Activated T-helper 1 cell treated with anti-CD3 and anti-CD28 coated beads, Interleukin-12 subunit alpha, Interleukin-12 subunit beta, Interleukin-2, Interleukin-4 antibody, amounts not matched to agents 30 ng/mL and 10 ng/mL and 1 ng/mL, durations not matched to agents 14 hours and 24 hours and 36 hours (primary cell): ENCODE measurements at regions of chr13 and their contacts with region 1.

Region 1: DNA sequence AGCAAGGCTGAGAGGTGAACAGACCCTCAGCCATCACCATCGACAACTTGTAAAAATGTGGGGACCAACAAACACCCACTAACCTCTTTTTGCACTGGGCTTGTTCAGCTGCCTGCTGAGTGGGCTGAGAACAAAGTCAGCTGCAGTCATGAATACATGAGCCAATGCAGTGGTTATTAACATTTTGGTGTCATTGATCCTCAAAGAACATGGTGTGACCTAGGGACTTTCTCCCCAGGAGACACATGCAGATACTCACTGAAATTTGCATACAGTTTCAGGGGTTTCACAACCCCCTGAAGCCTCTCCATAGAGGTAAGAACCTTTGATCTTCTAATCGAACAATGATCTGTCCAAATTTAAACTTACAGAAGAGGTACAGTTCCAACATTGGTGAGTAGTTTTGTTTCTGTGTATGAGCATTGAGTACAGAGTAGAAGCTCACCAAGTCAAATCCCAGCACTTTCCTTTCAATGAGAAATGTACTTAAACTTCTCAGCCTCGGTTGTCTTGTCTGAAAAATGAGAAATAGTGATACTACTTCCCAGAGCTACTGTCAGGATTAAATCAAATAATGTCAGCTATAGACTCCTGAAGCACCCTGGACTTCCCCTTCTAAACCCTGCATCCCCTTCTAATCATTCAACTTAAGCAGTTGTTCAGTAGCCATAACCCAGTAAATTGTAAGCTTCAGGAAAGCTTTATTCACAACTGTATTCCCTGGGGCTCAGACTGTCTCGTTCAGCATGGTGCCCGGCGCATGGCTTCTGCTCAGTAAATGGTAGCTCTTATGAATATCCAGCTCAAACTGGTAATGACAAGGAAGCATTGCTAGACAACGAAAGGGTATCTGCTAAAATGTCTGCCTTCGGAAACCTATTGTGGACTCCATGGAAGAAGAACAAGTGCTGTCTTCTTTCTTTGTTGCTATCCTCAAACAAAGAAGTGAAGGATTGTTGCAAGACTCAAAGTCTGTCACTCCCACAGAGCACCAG is 148.7 kb downstream of the FOXO1 start:
- DNase-seq: no peak
- H3K4me3 Mint-ChIP-seq: peak overlapping the region; percentile 62
- H3K27ac Mint-ChIP-seq: peak overlapping the region; percentile 69
- H3K4me1 Mint-ChIP-seq: peaks cover 83% of the 10 kb centered on the region
- H3K27me3 Mint-ChIP-seq: no peaks in the 10 kb centered on the region

Region 2: DNA sequence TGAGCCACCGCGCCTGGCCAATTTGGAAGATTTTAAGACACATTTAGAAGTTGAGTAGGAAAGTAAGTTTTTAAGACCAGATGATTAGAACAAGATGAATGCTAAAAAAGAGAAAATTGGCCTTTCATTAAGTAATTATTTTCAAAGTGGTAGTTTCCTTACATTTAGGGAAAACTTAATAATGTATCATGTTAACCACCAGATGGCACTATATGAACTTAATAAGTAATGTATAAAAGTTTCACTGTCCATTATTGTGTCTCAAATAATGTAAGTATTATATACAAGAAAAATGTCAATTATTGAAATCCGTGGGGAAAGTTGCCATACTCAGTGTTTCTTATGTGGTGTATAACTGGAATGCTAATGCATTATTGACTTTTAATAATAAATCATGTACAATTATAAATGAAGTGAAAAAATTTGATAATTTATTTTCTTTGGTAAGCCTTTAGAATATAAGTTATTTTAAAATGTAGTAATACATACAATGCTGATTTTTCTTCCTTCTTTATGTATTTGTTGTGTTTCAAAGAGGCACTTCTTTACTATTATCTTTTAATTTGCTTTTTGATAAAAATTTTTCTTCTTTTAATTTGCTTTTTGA is 833.1 kb before region 1 on chr13:
- intact Hi-C with region 1: loop called (anchors 10 kb)
- DNase-seq: no peak
- H3K4me3 Mint-ChIP-seq: no peak overlapping the region
- H3K27ac Mint-ChIP-seq: no peak overlapping the region
- H3K4me1 Mint-ChIP-seq: peaks cover 25% of the 10 kb centered on the region
- H3K27me3 Mint-ChIP-seq: no peaks in the 10 kb centered on the region

Region 3: DNA sequence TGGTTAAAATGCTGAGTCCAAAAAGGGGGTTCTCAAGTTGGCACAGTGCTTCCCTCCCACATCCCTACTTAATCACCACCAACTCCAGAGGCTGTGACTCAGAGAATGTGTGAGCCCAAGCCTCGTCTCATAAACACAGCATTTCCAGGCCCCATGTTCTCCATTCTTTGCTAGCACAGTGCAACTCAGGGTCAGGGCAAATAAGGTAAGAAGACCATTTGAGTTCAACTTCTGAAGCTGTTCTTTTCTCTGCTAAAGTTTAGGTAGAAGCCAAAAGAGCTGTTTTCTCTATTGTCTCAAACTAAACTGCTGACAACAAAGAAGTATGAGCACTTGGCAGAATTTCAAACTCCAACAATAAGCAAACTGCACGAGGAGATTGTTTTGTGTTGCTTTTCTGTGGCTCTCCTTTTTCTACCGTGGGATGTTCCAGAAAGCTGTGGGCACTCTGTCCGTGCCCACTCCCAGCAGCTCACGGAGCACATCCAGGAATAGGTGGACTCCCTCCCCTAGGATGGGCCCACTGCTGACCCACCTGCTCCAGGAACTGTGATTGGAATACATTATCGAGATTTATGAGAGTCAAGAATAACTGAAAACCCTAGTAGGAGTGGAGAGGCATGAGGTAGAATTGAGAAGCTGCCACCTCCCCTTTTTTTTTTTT is 368.0 kb before region 1 on chr13:
- intact Hi-C with region 1: loop called (anchors 1 kb)
- DNase-seq: no peak
- H3K4me3 Mint-ChIP-seq: no peak overlapping the region
- H3K27ac Mint-ChIP-seq: no peak overlapping the region
- H3K4me1 Mint-ChIP-seq: peaks cover 67% of the 10 kb centered on the region
- H3K27me3 Mint-ChIP-seq: no peaks in the 10 kb centered on the region

Region 4: DNA sequence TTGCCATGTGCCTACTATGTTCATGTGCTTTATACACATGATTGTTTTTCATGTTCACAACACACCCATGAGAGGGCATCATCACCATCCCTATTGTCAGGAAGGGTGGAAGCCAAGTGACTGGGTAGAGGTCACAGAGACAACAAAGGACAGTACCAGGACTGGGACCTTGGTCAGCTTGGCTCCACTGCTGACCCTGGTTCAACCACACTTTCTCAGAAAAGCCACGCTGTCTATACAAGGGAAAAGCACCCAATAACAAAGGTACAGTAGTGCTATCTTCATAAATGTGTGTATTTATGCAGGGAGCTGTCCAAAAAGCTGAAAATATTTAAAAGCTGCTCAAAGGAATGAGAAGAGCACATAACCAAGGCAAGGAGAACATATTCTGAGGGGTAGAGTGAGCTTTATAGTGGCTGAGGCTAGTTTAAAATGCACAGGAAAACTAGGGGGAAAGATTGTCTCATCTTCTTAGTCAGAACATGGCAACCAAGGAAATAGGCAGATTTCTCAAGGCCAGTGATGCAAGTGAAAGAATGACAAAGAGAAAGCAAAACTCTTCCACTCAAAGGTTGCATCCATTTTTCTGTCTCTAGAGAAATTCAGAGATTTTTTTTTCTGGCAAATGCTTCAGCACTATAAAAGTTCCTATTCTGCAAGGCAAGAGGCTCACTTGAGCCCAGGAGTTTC is 266.3 kb before region 1 on chr13:
- intact Hi-C with region 1: loop called (anchors 1 kb)
- DNase-seq: peak; percentile 4
- H3K4me3 Mint-ChIP-seq: no peak overlapping the region
- H3K27ac Mint-ChIP-seq: peak overlapping the region; percentile 78
- H3K4me1 Mint-ChIP-seq: peaks cover 39% of the 10 kb centered on the region
- H3K27me3 Mint-ChIP-seq: no peaks in the 10 kb centered on the region

Region 5: DNA sequence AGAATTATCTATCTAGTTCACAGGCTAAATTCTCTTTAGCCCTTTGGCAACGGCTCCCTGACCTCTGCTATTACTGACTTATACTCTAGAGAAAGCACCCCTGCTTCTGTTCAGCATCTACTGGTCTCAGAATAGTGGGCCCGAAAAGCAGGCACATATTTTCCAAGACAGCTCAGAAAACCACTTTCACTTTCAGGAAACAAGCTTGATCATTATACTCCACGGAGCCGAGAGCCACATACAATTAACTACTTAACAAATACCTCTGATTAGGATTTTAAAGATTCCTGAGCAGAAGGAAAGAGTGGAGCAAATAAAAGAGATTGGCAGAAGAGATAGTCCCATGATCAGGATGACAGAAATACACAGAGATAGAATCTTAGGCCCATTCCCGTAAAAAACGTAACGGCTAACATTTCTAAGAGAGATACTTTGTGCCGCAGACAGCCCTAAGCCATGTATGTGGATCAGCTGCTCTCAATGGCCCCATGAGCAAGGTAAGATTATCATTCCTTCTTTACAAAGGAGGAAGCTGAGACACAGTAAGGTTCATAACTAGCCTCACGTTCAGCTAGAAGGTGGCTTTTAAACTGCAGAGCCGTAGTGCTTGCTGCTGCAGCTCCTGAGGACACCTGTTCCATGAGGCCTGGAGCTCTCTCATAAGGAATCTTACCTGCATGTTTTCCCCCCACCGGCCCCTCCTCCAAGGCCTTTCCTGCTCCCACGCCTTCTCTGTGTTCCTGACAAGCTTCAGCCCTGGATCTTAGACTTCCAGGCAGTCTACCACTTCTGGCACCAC is 78.6 kb before region 1 on chr13:
- intact Hi-C with region 1: loop called (anchors 2 kb)
- DNase-seq: no peak
- H3K4me3 Mint-ChIP-seq: peak overlapping the region; percentile 23
- H3K27ac Mint-ChIP-seq: peak overlapping the region; percentile 73
- H3K4me1 Mint-ChIP-seq: peaks cover 33% of the 10 kb centered on the region
- H3K27me3 Mint-ChIP-seq: peaks cover 2% of the 10 kb centered on the region

Region 6: DNA sequence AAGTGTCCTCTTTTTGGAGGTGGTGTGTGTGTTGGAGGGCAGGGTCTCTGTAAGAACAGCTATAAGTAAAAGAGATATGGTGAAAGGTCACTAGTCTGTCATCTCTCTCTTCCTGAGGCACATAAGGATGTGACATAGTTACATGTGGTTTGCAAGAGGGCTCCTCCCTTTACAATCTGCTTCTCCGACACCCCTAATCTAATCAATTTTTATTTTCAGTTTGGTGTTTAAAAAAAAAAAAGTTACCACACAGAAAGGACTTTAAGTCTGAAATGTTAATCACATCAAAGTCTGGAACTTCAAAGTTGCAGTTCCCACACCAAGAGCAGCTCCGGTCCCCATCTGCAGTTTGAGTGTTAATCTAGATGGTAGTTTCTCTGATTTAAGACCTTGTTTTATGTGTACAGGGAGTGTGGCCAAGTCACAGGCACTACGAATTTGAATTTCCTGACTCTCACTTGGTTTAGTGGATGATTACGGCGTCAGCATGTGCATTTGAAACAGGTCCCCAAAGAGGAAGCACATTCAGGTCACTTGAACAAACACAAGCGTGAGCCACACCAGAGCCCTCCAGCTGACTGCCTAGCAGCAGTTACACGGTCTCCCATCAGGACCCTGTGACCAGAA is 95.5 kb after region 1 on chr13:
- intact Hi-C with region 1: loop called (anchors 5 kb)
- DNase-seq: peak; percentile 45
- H3K4me3 Mint-ChIP-seq: peak overlapping the region; percentile 78
- H3K27ac Mint-ChIP-seq: peak overlapping the region; percentile 91
- H3K4me1 Mint-ChIP-seq: peaks cover 78% of the 10 kb centered on the region
- H3K27me3 Mint-ChIP-seq: no peaks in the 10 kb centered on the region

Region 7: GRCh38 chr13:41004875-41005693 is 487.3 kb after region 1 on chr13:
- intact Hi-C with region 1: loop called (anchors 10 kb)
- DNase-seq: no peak
- H3K4me3 Mint-ChIP-seq: peak overlapping the region; percentile 59
- H3K27ac Mint-ChIP-seq: peak overlapping the region; percentile 88
- H3K4me1 Mint-ChIP-seq: peaks cover 66% of the 10 kb centered on the region
- H3K27me3 Mint-ChIP-seq: no peaks in the 10 kb centered on the region